ENCODE measurements at regions of chr11 and their contacts with region 1.

Region 1: GRCh38 chr11:19814421-19814820 is 101.8 kb downstream of the NAV2 start:
- DNase-seq: no peak
- ATAC-seq: no peak
- H3K4me3 ChIP-seq: no peak overlapping the region
- H3K27ac ChIP-seq: peak overlapping the region in 2 of 4 donors; percentile 74 to 76
- H3K4me1 ChIP-seq: peaks cover 57 to 65% of the 10 kb centered on the region in 2 donors
- H3K27me3 ChIP-seq: no peaks in the 10 kb centered on the region
- CTCF ChIP-seq: peak in 1 of 5 experiments; percentile 8
- POLR2A ChIP-seq: no peak

Region 2: DNA sequence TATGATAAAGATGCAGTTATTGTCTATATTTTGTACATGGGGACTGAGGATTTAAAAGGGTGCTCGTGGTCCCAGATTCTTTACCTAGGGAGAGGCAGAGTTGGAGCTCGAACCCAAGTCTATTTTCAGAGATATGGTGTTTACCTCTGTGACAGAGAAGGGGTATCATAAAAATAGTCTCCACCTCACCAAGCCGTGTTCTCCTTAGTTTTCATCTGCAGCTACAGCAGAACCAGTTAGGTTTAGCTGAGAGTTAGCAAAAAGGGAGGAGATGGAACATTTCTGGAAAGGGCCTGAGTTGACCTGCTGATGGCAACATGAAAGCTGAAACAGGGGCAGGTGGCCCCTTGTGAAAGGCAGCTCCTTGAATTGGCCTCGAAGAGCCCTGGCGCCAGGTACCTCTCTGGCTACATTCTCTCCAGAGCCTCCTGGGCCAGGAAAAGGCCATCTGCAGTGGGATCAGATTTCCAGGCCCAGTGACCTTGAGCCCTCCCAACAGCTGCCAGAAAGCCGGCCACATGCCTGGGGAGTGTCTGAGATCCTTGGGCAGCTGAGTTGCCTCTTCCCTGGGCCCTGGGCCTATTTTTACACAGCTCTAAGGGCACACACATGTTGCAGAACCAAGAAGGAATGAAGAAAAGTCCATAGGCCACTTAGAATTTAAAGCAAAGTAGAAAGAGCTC is 34.8 kb after region 1 on chr11:
- in situ Hi-C with region 1: no loop called
- intact Hi-C with region 1: loop called (anchors 1 kb)
- DNase-seq: peak; percentile 82 to 95
- ATAC-seq: peak; percentile 98
- H3K4me3 ChIP-seq: no peak overlapping the region
- H3K27ac ChIP-seq: peak overlapping the region; percentile 71 to 76 (median 74)
- H3K4me1 ChIP-seq: peaks cover 23 to 40% of the 10 kb centered on the region in 2 donors
- H3K27me3 ChIP-seq: no peaks in the 10 kb centered on the region
- CTCF ChIP-seq: no peak
- POLR2A ChIP-seq: no peak